ENCODE measurements at regions of chr5 and their contacts with region 1.

Region 1: DNA sequence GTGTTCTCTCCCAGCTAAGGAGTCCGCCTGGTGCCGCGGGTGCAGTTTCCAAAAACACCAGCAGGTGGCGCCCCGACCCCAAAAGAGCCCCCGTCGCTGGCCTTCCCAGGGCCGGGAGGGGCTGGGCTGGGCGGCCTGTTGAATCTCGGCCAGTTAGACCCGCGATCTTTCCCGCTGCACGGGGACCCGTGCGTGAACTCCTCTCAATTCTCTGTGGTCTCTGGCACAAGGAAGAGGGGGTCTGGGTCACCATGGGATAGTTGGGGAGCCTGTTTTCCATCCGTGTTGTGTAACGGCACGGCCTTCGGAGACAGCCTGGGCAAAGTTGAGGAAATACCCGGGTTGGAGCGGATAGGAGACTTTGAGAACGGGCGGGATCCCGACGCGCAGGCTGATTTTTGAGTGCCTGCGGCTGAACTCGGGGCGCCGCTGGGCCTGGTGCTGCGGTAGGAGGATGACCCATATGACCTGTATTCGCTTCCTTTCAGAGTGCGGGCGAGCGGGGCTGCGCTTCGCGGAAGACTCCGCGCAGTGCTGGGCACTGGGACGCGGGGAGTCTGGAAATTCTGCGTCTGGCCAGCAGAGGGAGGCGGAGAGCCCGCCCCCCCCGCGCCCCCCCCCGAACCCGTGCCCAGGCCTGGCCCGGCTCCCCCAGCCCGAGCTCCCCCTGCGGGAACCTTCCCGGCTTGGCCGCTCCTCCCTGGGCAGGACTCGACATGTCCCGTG is 7.9 kb upstream of the PSD2 start:
- DNase-seq: peak; percentile 96

Region 2: DNA sequence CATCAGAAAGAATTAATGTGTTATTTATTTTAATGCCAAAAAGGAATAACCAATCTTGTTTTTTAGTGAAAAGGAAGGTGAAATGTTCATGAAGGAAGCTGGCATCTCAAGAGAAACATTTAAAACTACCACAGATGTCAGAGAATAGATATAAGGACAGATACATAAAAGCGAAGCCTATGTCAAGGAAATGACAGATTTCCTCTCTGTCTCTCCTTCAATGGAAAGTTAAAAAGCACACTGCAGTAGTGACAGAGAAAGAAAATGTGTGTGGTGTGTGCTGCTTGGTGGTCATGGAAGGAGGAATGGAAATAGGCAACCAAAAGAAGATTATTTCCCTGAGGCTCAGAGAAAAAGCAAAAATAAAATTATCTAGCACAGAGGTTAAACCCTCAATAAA is 1694.7 kb before region 1 on chr5:
- intact Hi-C with region 1: loop called in 1 of 2 experiments (anchors 5 kb)
- DNase-seq: no peak

Region 3: GRCh38 chr5:139844472-139845145 is 56.9 kb after region 1 on chr5:
- intact Hi-C with region 1: loop called (anchors 1 to 5 kb)
- DNase-seq: peak; percentile 91

Region 4: DNA sequence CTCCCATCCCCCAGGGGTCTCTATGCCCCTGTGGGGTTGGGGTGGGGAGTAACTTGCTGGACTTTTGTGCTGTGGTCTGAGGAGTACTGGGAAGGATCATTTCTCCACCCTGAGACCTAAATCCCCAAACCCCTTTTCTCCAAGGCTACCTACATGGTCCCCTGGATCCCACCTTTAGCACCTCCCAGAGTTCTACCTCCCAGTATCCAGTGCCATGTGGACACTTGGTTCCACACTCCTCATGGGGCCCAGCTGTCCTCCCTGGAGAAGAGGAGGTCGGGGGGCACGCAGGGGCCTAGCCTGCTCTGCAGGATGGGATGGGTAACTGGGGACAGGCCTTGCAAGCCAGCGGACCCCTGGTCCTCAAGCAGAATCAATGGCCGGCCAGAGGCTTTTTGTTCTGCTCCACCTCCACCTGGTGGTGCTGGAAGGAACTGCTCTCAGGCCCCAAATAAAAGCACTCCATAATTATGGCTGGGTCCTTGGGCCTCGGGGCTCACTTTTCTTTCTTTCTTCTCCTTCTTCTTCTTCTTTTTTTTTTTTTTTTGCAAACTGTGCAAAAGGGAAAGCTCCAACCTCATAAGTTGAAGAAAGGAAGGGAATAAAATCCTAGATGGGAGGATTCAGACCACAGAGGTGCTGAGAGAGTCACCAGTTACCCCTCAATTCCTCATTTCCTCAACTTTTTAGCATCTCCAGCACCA is 76.3 kb after region 1 on chr5:
- intact Hi-C with region 1: loop called in 1 of 2 experiments (anchors 5 kb)
- DNase-seq: peak; percentile 87

Region 5: DNA sequence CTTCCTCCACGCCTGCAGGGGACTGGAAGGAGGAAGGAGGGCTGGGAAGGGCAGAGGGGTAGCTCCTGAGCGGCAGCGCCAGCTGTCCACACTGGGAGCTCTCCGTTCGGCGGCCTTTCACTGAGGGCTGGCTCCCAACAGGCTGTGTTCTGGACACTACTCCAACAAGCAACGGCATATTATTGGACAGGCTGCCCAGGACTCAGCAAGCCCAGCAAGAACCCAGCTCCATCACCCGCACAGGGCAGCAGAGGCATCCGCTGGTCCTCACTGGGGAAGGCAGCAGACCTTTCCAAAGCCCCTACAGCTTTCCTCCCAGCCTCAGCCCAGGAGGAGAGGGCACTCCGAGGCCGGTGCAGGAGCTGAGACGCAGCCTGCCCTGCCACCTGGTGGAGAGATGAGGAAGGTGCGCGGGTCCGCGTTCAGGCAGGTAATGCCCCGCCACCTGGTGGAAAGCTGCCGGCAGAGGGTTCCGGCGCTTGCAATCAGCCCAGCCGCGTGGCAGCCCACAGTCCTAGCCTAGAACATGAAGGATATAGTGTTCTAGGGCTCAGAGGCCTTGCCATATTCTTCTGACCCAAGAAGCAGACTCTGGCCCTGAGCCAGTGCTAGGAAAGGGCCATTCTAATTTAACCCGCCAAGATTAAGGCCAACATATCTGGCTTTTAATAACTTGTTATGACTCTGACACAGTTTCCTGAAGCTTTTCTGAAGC is 181.0 kb after region 1 on chr5:
- intact Hi-C with region 1: loop called (anchors 5 kb)
- DNase-seq: peak; percentile 94

Measured in posterior vena cava (tissue), 2 donors.